ENCODE measurements at regions of chr3 and their contacts with region 1.

Region 1: GRCh38 chr3:186617038-186617946 is 4.4 kb downstream of the AHSG start:
- DNase-seq: peak; percentile 92
- ATAC-seq: peak; percentile 97
- H3K4me3 ChIP-seq: no peak overlapping the region
- H3K27ac ChIP-seq: no peak overlapping the region
- H3K4me1 ChIP-seq: peaks cover 11% of the 10 kb centered on the region
- H3K27me3 ChIP-seq: peaks cover 28% of the 10 kb centered on the region
- CTCF ChIP-seq: peak; percentile 91

Region 2: DNA sequence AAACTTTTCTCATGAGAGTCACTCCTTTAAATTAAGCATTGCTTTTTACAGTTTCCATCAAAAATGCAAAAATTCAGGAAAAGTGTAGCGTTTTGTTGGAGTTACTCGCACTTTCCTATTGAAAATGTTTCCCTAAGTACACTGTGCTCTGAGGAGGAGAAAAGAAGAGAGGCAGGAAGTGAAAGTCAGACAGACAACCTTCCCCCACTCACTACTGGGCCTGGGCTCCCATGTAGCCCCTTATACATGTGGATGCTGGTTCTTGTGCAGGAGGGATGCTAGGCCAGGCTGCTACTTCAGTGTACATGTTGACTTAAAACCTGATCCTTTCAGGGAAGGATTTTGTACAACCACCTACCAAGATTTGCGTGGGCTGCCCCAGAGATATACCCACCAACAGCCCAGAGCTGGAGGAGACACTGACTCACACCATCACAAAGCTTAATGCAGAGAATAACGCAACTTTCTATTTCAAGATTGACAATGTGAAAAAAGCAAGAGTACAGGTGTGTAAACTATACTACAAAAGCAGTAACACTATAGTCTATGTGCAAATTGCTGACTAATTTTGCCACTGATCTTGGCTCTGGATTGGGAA is 115.0 kb after region 1 on chr3:
- intact Hi-C with region 1: no loop called
- DNase-seq: no peak
- ATAC-seq: no peak
- H3K4me3 ChIP-seq: no peak overlapping the region
- H3K27ac ChIP-seq: no peak overlapping the region
- H3K4me1 ChIP-seq: no peaks in the 10 kb centered on the region
- H3K27me3 ChIP-seq: no peaks in the 10 kb centered on the region
- CTCF ChIP-seq: no peak

Region 3: DNA sequence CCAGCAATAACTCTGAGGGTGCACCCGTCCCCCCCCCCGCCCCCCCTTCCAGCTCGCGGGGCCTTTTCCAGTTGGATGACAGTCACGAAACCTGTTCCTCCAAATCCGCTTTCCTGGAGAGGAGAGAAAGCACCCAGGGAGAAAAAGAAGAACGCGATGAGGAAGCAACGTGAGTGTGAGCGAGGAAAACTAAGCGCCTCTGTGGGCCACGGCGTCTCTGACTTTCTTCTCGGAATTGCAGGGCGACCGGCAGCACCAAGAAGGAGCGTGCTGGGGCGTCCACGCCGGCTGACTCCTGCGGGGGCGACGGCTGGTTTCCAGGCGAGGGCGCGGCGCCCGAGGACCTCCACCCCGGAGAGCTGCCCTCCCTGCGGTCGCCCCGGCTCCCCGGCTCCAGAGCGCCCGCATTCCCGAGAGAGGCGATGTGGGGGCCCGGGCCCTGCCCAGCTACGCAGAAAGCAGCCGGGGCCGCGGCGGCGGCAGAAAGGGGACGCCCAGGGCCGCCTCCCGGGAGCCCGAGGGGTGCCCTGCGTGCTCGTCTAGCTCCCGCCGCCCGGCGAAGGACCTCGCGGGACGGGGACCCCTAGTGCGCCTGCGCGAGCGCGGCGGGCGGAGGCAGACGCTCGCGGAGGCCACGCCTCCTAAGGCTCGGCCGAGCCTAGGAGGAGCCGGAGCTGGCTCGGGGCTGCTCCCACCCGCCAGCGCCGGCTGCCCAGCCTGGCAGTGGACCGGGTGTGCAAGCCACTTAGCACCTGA is 209.9 kb after region 1 on chr3:
- intact Hi-C with region 1: loop called (anchors 10 kb)
- DNase-seq: peak; percentile 89
- ATAC-seq: peak; percentile 97 to 98
- H3K4me3 ChIP-seq: peak overlapping the region; percentile 73
- H3K27ac ChIP-seq: peak overlapping the region; percentile 49
- H3K4me1 ChIP-seq: peaks cover 22% of the 10 kb centered on the region
- H3K27me3 ChIP-seq: peaks cover 69% of the 10 kb centered on the region
- CTCF ChIP-seq: no peak